SK-N-SH (cell line): ENCODE measurements at regions of chr20 and their contacts with region 1.

Region 1: DNA sequence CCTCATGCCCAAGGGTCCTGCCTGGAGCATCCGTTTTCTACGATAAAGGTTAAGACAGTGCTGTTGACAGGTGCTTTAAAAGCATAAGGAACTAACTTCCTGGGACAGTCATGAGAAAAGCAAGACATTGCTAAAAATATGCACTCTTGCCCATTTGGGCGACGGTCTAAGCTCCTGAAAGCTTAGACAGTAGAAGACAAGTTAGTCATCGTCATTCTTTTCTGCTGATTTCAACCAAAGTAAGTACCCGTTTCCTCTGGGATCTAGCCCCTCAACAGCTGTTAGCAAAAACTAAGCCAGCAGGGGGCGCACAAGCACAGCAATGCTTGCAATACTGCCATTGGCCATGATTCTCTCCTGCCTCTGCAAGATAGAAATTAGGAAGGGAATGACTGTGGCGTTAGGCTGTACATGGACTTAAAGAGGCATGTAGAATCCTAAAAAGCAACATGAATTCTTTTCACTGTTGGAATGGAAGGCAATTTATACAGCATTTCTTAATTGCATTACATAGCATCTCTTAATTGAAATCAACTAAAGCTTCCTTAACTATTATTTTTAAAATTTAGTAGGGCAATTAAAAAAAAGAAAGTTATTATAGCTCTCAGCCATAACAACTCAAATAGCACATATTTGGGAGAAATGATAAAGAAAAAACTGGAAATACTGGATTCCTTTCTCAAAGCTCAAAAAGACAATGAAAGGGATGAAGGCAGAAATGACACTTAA is 147.8 kb upstream of the RALGAPA2 start:
- DNase-seq: peak; percentile 72
- H3K4me3 ChIP-seq: peak overlapping the region in 1 of 2 experiments; percentile 28; a peak in 1 of 4 replicates
- H3K27ac ChIP-seq: no peak overlapping the region
- H3K4me1 ChIP-seq: no peaks in the 10 kb centered on the region
- H3K27me3 ChIP-seq: peaks cover 10% of the 10 kb centered on the region; the same call in 1 of the 2 replicates
- CTCF ChIP-seq: peak; percentile 96
- EP300 ChIP-seq: no peak
- RAD21 ChIP-seq: peak; percentile 82

Region 2: GRCh38 chr20:20843982-20844381 is 16.3 kb before region 1 on chr20:
- CTCF ChIA-PET with region 1: interaction called, 21 read pairs
- POLR2A ChIA-PET with region 1: no interaction called
- DNase-seq: no peak
- H3K4me3 ChIP-seq: no peak overlapping the region
- H3K27ac ChIP-seq: no peak overlapping the region
- H3K4me1 ChIP-seq: no peaks in the 10 kb centered on the region
- H3K27me3 ChIP-seq: peaks cover 32% of the 10 kb centered on the region
- CTCF ChIP-seq: no peak
- EP300 ChIP-seq: no peak
- RAD21 ChIP-seq: no peak

Region 3: DNA sequence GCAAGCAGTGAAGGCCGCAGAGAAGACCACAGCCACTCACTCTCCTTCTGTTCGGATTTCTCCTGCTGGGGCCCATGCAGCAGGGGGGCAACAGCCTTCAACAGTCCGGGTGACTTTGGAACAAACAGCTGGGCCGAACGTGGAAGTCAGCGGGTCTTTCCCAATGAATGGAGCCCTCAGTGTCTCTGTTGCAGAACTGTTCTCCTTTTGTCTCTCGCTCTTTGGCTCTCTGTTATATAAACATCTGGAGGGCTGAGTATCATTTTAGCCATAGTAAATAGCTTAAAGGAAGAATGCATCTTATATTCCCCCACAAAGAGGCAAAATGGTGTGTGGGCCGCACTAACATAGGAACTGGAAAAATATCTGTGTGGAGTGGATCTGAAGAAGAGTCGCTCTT is 11.1 kb before region 1 on chr20:
- CTCF ChIA-PET with region 1: interaction called, 25 read pairs
- POLR2A ChIA-PET with region 1: no interaction called
- DNase-seq: no peak
- H3K4me3 ChIP-seq: no peak overlapping the region
- H3K27ac ChIP-seq: no peak overlapping the region
- H3K4me1 ChIP-seq: no peaks in the 10 kb centered on the region
- H3K27me3 ChIP-seq: peaks cover 25% of the 10 kb centered on the region
- CTCF ChIP-seq: no peak
- EP300 ChIP-seq: no peak
- RAD21 ChIP-seq: no peak

Region 4: GRCh38 chr20:20872428-20872827 is 12.2 kb after region 1 on chr20:
- CTCF ChIA-PET with region 1: interaction called, 40 read pairs
- POLR2A ChIA-PET with region 1: no interaction called
- DNase-seq: no peak
- H3K4me3 ChIP-seq: no peak overlapping the region
- H3K27ac ChIP-seq: no peak overlapping the region
- H3K4me1 ChIP-seq: no peaks in the 10 kb centered on the region
- H3K27me3 ChIP-seq: no peaks in the 10 kb centered on the region; the same call in 1 of the 2 replicates
- CTCF ChIP-seq: no peak
- EP300 ChIP-seq: no peak
- RAD21 ChIP-seq: no peak

Region 5: DNA sequence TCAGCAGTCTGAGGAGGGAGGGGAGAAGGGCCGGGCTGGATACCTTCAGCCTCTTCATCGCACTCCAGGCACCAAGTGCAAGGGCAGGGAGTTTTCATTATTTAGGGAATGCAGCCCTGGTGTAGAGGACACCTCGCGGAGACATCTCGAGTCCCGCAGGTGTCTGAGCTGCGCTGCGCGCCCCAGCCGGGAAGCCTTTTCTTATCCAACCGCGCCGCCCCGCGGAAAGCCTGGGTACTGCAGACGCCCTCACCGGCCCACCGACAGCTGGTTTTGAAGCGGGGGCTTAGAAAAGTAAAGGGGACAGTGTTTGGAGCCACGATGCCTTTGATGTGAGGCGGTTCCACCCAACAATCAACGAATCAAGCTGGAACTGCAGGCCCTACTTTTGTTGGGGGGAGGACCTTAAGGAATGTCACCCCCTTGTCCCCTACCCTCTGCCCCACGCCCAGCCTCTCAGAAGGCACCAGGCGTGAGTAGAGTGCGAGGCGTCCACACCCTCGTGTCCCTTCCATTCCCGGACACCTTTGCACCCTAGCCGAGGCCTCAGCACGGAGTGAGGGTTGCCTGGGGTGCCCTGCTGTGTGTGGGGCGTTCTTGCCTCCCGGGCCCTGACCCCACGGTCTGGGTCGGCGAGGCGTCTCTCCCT is 645.0 kb after region 1 on chr20:
- CTCF ChIA-PET with region 1: interaction called, 145 read pairs
- POLR2A ChIA-PET with region 1: no interaction called
- DNase-seq: peak; percentile 85
- H3K4me3 ChIP-seq: peak overlapping the region in 1 of 2 experiments; percentile 23; a peak in 1 of 4 replicates
- H3K27ac ChIP-seq: no peak overlapping the region
- H3K4me1 ChIP-seq: peaks cover 0 to 4% of the 10 kb centered on the region in 2 experiments; a peak in 2 of 4 replicates
- H3K27me3 ChIP-seq: peaks cover 79% of the 10 kb centered on the region
- CTCF ChIP-seq: peak; percentile 97
- EP300 ChIP-seq: no peak
- RAD21 ChIP-seq: peak; percentile 93

Region 6: DNA sequence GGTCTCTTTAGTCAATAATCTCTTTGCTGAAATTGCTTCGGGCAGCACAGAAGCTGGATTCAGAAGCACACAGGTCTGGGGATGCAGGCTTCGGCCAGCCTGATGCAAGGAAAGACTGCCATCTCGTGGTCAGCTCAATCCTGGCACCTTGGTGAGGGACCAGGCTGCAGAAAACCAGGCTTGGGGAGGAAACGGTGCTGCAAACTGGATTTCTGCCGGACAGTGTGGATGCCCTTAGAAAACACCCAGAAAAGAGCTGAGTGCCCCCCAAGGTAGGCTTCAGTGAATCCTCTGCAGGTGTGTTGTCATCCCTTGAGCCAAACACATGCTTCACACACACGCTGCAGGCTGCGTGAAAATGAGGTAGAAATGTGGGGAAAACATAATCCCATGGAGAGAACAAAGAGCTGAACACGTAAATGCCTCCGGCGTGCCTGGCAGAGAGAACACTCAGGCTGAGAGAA is 755.4 kb after region 1 on chr20:
- CTCF ChIA-PET with region 1: interaction called, 16 read pairs
- POLR2A ChIA-PET with region 1: no interaction called
- DNase-seq: peak; percentile 70
- H3K4me3 ChIP-seq: no peak overlapping the region; a peak in 1 of 4 replicates
- H3K27ac ChIP-seq: no peak overlapping the region
- H3K4me1 ChIP-seq: no peaks in the 10 kb centered on the region
- H3K27me3 ChIP-seq: peaks cover 17% of the 10 kb centered on the region; the same call in 1 of the 2 replicates
- CTCF ChIP-seq: peak; percentile 85
- EP300 ChIP-seq: no peak
- RAD21 ChIP-seq: peak; percentile 73